B cell (primary cell): ENCODE measurements at regions of chr11 and their contacts with region 1.

Region 1: DNA sequence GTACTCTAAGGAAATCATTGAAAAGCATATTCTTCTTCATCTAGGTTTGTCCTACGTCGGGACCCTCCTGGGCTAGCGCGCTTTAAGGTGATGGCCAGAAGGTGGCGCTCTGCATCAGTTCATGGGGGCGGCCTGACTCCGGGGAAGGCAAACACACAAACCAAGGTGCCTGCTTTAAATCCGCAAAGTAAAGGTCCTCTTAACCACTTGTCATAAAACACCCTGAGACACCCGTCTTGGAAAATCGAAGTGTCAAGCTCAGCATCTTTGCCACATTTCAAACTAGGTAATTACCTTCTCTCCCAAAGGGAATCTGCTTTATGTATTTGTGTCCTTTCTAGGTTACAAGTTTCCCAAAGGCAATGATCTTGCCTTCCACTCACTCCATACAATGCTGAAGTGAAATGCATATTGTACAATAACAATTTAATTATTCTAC is 33.9 kb downstream of the LMO2 start:
- DNase-seq: peak; percentile 86
- ATAC-seq: peak; percentile 96
- H3K4me3 ChIP-seq: no peak overlapping the region
- H3K4me3 Mint-ChIP-seq: no peak overlapping the region
- H3K27ac ChIP-seq: no peak overlapping the region
- H3K27ac Mint-ChIP-seq: no peak overlapping the region
- H3K4me1 ChIP-seq: no peaks in the 10 kb centered on the region
- H3K4me1 Mint-ChIP-seq: peaks cover 6% of the 10 kb centered on the region
- H3K27me3 ChIP-seq: no peaks in the 10 kb centered on the region
- H3K27me3 Mint-ChIP-seq: no peaks in the 10 kb centered on the region
- CTCF ChIP-seq: peak; percentile 93

Region 2: GRCh38 chr11:33869481-33870422 is 11.8 kb after region 1 on chr11:
- CTCF ChIA-PET with region 1: interaction called, 30 read pairs
- POLR2A ChIA-PET with region 1: no interaction called
- intact Hi-C with region 1: no loop called
- DNase-seq: peak; percentile 75
- ATAC-seq: peak; percentile 72
- H3K4me3 ChIP-seq: peak overlapping the region; percentile 64 to 86 (median 82)
- H3K4me3 Mint-ChIP-seq: peak overlapping the region; percentile 98
- H3K27ac ChIP-seq: no peak overlapping the region
- H3K27ac Mint-ChIP-seq: peak overlapping the region; percentile 83
- H3K4me1 ChIP-seq: peaks cover 26 to 30% of the 10 kb centered on the region in 2 donors
- H3K4me1 Mint-ChIP-seq: peaks cover 32% of the 10 kb centered on the region
- H3K27me3 ChIP-seq: peaks cover 0 to 7% (median 0%) of the 10 kb centered on the region in 4 experiments
- H3K27me3 Mint-ChIP-seq: peaks cover 3% of the 10 kb centered on the region
- CTCF ChIP-seq: no peak

Region 3: GRCh38 chr11:33899383-33900037 is 41.6 kb after region 1 on chr11:
- CTCF ChIA-PET with region 1: interaction called, 4 read pairs
- POLR2A ChIA-PET with region 1: no interaction called
- intact Hi-C with region 1: loop called (anchors 5 kb)
- DNase-seq: no peak
- ATAC-seq: no peak
- H3K4me3 ChIP-seq: peak overlapping the region in 1 of 5 experiments; percentile 8
- H3K4me3 Mint-ChIP-seq: no peak overlapping the region
- H3K27ac ChIP-seq: peak overlapping the region in 1 of 2 donors; percentile 64
- H3K27ac Mint-ChIP-seq: peak overlapping the region; percentile 5
- H3K4me1 ChIP-seq: peaks cover 46 to 48% of the 10 kb centered on the region in 2 donors
- H3K4me1 Mint-ChIP-seq: peaks cover 53% of the 10 kb centered on the region
- H3K27me3 ChIP-seq: no peaks in the 10 kb centered on the region
- H3K27me3 Mint-ChIP-seq: no peaks in the 10 kb centered on the region
- CTCF ChIP-seq: no peak

Region 4: DNA sequence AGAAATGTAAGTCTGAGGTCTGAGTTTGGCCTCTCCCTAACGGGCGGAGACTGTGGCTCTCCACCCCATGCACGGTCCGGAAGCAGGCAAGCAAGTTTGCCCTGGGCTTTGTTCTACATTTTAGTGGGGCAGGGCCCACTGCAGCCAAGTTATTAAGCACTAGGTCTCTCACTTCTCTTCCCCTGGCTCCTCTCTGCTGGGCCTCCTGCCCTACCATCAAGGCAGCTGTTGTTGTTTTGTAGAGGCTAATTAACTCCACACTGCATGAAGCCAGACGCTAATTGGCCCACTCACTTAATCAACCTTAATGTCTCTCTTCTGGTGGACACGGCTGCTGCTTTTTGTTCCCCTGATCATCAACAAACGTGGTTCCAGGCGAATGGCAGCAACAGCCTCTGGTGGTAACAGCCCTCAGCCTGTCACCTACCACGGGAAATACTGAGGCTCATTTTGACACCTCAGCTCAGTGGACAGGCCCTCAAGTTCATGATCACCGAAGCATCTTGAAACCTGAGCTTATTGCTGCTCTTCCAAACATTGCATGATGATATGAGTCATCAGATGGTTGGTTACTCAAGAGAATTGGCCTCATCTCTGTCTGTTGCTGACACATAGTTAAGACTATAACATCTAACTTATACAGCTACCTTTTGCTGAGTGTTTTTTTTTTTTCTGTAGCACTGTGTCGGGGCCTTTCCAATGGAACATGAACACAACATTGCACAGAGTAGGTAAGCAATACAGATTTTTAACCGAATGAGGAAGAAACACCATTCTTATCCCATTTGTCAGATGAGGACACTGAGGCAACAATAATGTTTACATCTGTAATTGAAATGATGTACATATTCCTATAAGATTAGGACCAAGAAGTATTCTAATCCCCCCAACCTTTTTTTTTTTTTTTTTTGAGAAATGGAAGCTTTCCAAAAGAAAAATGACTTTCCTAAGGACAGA is 54.7 kb after region 1 on chr11:
- CTCF ChIA-PET with region 1: interaction called, 11 read pairs
- POLR2A ChIA-PET with region 1: no interaction called
- intact Hi-C with region 1: no loop called
- DNase-seq: peak; percentile 29
- ATAC-seq: peak; percentile 76
- H3K4me3 ChIP-seq: no peak overlapping the region
- H3K4me3 Mint-ChIP-seq: peak overlapping the region; percentile 29
- H3K27ac ChIP-seq: peak overlapping the region; percentile 2 to 49
- H3K27ac Mint-ChIP-seq: peak overlapping the region; percentile 82
- H3K4me1 ChIP-seq: peaks cover 14 to 15% of the 10 kb centered on the region in 2 donors
- H3K4me1 Mint-ChIP-seq: peaks cover 24% of the 10 kb centered on the region
- H3K27me3 ChIP-seq: peaks cover 0 to 14% (median 3%) of the 10 kb centered on the region in 4 experiments
- H3K27me3 Mint-ChIP-seq: peaks cover 27% of the 10 kb centered on the region
- CTCF ChIP-seq: no peak

Region 5: GRCh38 chr11:33959855-33960400 is 102.0 kb after region 1 on chr11:
- CTCF ChIA-PET with region 1: interaction called, 16 read pairs
- POLR2A ChIA-PET with region 1: no interaction called
- intact Hi-C with region 1: no loop called
- DNase-seq: no peak
- ATAC-seq: no peak
- H3K4me3 ChIP-seq: no peak overlapping the region
- H3K4me3 Mint-ChIP-seq: no peak overlapping the region
- H3K27ac ChIP-seq: no peak overlapping the region
- H3K27ac Mint-ChIP-seq: no peak overlapping the region
- H3K4me1 ChIP-seq: no peaks in the 10 kb centered on the region
- H3K4me1 Mint-ChIP-seq: no peaks in the 10 kb centered on the region
- H3K27me3 ChIP-seq: peaks cover 0 to 2% (median 0%) of the 10 kb centered on the region in 4 experiments
- H3K27me3 Mint-ChIP-seq: no peaks in the 10 kb centered on the region
- CTCF ChIP-seq: no peak

Region 6: GRCh38 chr11:33965032-33965431 is 107.1 kb after region 1 on chr11:
- CTCF ChIA-PET with region 1: interaction called, 273 read pairs
- POLR2A ChIA-PET with region 1: no interaction called
- intact Hi-C with region 1: no loop called
- DNase-seq: no peak
- ATAC-seq: no peak
- H3K4me3 ChIP-seq: no peak overlapping the region
- H3K4me3 Mint-ChIP-seq: no peak overlapping the region
- H3K27ac ChIP-seq: no peak overlapping the region
- H3K27ac Mint-ChIP-seq: no peak overlapping the region
- H3K4me1 ChIP-seq: no peaks in the 10 kb centered on the region
- H3K4me1 Mint-ChIP-seq: no peaks in the 10 kb centered on the region
- H3K27me3 ChIP-seq: peaks cover 0 to 2% (median 0%) of the 10 kb centered on the region in 4 experiments
- H3K27me3 Mint-ChIP-seq: no peaks in the 10 kb centered on the region
- CTCF ChIP-seq: no peak